ENCODE measurements at regions of chr17 and their contacts with region 1.

Region 1: GRCh38 chr17:39416141-39416540 is 14.7 kb upstream of the FBXL20 start:
- DNase-seq: no peak
- H3K4me3 ChIP-seq: no peak overlapping the region
- H3K27me3 ChIP-seq: no peaks in the 10 kb centered on the region
- CTCF ChIP-seq: no peak

Region 2: DNA sequence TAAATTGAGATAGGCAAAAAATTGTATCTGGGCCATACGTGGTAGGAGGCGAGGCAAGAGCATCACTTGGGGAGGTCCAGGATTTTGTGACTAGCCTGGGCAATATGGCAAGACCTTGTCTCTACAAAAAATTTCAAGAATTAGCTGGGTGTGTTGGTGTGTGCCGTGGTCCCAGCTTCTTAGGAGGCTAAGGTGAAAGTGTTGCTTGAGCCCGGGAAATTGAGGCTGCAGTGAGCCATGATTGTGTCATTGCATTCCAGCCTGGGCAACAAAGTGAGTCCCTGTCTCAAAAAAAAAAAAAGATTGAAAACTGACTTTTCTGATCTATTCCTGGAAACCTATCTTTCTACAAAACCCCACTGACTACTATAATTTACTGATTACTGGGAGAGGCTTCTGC is 71.8 kb after region 1 on chr17:
- CTCF ChIA-PET with region 1: interaction called, 3 read pairs
- POLR2A ChIA-PET with region 1: interaction called, 15 read pairs
- DNase-seq: no peak
- H3K4me3 ChIP-seq: no peak overlapping the region
- H3K27me3 ChIP-seq: no peaks in the 10 kb centered on the region
- CTCF ChIP-seq: no peak

Measured in BJ (cell line).